ENCODE measurements at regions of chr4 and their contacts with region 1.

Region 1: GRCh38 chr4:106010761-106011160 is 115.5 kb downstream of the NPNT start:
- DNase-seq: no peak
- H3K4me3 ChIP-seq: no peak overlapping the region
- H3K27ac ChIP-seq: no peak overlapping the region
- H3K4me1 ChIP-seq: no peaks in the 10 kb centered on the region
- H3K27me3 ChIP-seq: no peaks in the 10 kb centered on the region
- CTCF ChIP-seq: no peak
- EP300 ChIP-seq: no peak
- POLR2A ChIP-seq: no peak

Region 2: DNA sequence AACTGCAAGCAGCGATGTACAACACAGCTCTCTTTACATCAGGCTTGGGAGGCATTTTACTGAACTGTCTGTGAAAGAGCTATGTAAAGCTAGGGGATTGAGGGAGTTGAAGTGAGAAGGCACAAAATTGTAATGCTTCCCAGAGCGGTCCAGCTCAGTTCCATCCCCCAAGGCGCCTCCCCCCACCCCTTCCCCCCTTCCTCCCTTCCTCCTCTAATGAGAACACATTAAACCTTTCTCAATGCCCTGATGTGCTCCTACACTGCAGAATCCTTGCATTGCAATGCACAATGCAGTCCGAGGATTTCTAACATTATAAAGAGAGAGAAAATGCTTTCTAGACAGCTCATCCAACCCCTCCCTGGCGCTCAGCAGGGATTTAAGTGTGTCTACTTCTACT is 1590.0 kb before region 1 on chr4:
- in situ Hi-C with region 1: no loop called
- intact Hi-C with region 1: no loop called
- DNase-seq: no peak
- H3K4me3 ChIP-seq: no peak overlapping the region
- H3K27ac ChIP-seq: no peak overlapping the region
- H3K4me1 ChIP-seq: peaks cover 0 to 26% (median 7%) of the 10 kb centered on the region in 4 donors
- H3K27me3 ChIP-seq: no peaks in the 10 kb centered on the region
- CTCF ChIP-seq: no peak
- EP300 ChIP-seq: no peak
- POLR2A ChIP-seq: no peak

Region 3: GRCh38 chr4:107148904-107149303 is 1138.1 kb after region 1 on chr4:
- in situ Hi-C with region 1: no loop called
- intact Hi-C with region 1: loop called (anchors 5 kb)
- DNase-seq: no peak
- H3K4me3 ChIP-seq: no peak overlapping the region
- H3K27ac ChIP-seq: no peak overlapping the region
- H3K4me1 ChIP-seq: no peaks in the 10 kb centered on the region
- H3K27me3 ChIP-seq: no peaks in the 10 kb centered on the region
- CTCF ChIP-seq: no peak
- EP300 ChIP-seq: no peak
- POLR2A ChIP-seq: no peak

Measured in transverse colon (tissue), 4 donors.